Activated CD4-positive, alpha-beta T cell treated with anti-CD3 and anti-CD28 coated beads for 36 hours (primary cell): ENCODE measurements at regions of chr18 and their contacts with region 1.

Region 1: DNA sequence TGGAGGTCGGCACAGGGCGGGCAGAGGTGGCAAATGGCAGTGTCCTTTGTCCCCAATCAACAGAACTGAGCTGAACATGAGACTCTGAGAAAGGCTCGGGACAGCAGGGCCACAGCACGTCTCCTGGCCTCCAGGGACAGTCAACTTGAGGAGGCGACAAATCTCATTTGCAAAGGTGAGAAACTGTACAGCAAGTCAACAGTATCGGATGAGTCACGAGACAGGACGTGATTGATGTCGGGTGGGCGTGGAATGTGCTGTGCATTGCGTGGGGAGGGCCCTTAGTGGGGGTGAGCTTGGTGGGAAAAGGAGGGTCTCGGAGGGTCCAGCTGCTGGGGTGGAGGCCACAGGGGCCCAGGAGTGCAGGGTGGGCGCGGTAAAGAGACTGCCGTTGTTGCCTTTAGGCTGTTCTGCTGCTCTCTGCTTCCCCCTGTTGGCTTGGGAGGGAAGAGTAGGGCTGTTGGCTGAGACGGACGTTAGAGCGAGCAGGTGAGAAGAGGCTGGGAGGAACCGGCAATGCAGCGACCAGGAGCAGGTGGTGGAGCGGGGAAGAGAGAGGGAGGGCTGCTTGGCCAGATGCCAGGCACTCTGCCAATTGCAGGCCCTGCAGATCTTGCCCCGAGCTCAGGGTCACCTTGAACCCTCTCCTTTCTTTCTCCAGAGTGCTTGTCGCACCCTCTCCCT is 164.3 kb downstream of the BCL2 start:
- DNase-seq: peak; percentile 89
- ATAC-seq: peak; percentile 66
- H3K4me3 Mint-ChIP-seq: peak overlapping the region; percentile 73
- H3K27ac Mint-ChIP-seq: peak overlapping the region; percentile 95
- H3K4me1 Mint-ChIP-seq: peaks cover 99% of the 10 kb centered on the region
- H3K27me3 Mint-ChIP-seq: no peaks in the 10 kb centered on the region

Region 2: DNA sequence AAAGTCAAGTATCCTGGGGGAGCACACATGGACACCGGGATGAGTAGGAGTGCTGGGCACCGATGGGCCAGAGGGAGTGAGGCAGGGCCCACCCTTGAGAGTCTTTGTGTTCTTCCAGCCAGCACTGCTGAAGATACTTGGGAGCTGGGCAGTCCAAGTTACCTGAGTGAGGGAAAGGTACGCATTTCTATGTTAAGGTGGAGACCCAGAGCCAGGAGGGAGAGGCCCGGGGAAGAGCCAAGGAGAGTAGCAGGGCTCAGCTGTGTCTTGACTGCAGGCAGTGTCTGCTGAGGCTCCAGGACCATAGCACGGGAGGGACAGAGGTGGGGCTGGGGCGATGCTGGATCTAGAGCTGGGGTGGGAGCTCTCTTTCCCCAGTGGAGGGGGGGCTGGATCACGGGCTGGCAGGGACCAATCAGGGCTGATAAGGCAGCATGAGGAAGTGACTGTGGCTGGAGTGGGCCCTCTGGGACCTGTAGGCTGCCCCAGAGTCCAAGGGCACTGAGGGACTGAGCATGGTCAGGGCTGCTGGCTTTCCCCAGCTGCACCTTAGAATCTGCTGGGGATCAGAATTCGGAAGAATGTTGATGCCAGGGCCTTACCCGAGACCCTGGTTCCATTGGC is 150.7 kb before region 1 on chr18:
- CTCF ChIA-PET with region 1: no interaction called
- POLR2A ChIA-PET with region 1: no interaction called
- intact Hi-C with region 1: no loop called
- DNase-seq: no peak
- ATAC-seq: no peak
- H3K4me3 Mint-ChIP-seq: no peak overlapping the region
- H3K27ac Mint-ChIP-seq: no peak overlapping the region
- H3K4me1 Mint-ChIP-seq: no peaks in the 10 kb centered on the region
- H3K27me3 Mint-ChIP-seq: no peaks in the 10 kb centered on the region

Region 3: GRCh38 chr18:63074981-63075404 is 80.3 kb before region 1 on chr18:
- CTCF ChIA-PET with region 1: no interaction called
- POLR2A ChIA-PET with region 1: no interaction called
- intact Hi-C with region 1: no loop called
- DNase-seq: peak; percentile 84
- ATAC-seq: peak; percentile 90
- H3K4me3 Mint-ChIP-seq: peak overlapping the region; percentile 66
- H3K27ac Mint-ChIP-seq: no peak overlapping the region
- H3K4me1 Mint-ChIP-seq: peaks cover 7% of the 10 kb centered on the region
- H3K27me3 Mint-ChIP-seq: peaks cover 6% of the 10 kb centered on the region

Region 4: GRCh38 chr18:63131106-63131958 is 24.0 kb before region 1 on chr18:
- CTCF ChIA-PET with region 1: interaction called, 11 read pairs
- POLR2A ChIA-PET with region 1: no interaction called
- intact Hi-C with region 1: loop called in 1 of 2 experiments (anchors 1 kb)
- DNase-seq: peak; percentile 69
- ATAC-seq: peak; percentile 60
- H3K4me3 Mint-ChIP-seq: no peak overlapping the region
- H3K27ac Mint-ChIP-seq: peak overlapping the region; percentile 74
- H3K4me1 Mint-ChIP-seq: peaks cover 29% of the 10 kb centered on the region
- H3K27me3 Mint-ChIP-seq: no peaks in the 10 kb centered on the region

Region 5: DNA sequence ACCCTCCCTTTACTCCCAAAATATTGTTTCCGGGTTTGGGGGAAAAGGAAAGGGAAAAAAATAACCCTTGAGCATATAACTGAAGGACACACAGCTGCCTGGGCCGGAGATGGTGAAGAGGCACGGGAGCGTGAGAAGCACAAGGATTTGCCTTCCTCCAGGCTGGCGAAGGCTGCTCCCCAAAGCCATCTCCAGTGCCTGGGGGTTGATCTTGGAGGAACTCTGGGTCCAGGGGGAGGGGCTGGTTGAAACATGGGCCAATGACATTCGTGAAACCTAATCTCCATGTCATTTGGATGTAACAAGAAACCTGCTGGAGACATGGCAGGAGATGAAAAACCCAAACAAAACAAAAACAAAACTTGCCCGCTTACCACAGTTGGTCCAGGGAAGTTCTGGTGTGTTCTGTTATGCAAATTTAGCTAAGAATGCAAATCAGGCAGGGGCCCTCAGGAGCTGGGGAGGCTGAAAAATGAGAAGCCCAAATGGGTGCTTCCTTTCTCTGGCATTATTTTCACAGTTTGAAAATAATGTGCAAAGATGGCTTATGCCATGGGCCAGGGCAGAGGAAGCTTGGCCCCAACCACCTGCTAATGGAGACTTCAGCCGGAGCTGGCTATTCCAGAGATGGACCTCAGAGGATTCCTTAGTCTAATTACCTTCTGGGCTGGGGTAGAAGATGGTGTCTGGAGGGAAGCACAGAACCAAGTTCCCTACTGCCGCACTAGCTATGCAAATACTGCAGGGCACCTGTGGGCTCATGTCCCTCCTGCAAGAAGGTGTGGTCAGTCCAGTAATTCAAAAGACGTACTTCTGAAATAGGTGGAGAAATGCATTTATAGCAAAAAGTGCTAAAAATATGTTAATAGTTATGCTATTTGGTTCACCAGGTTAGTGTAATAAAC is 16.6 kb before region 1 on chr18:
- CTCF ChIA-PET with region 1: interaction called, 11 read pairs
- POLR2A ChIA-PET with region 1: interaction called, 4 read pairs
- intact Hi-C with region 1: loop called (anchors 1 to 2 kb)
- DNase-seq: peak; percentile 55
- ATAC-seq: peak; percentile 63
- H3K4me3 Mint-ChIP-seq: peak overlapping the region; percentile 72
- H3K27ac Mint-ChIP-seq: peak overlapping the region; percentile 70
- H3K4me1 Mint-ChIP-seq: peaks cover 54% of the 10 kb centered on the region
- H3K27me3 Mint-ChIP-seq: no peaks in the 10 kb centered on the region

Region 6: DNA sequence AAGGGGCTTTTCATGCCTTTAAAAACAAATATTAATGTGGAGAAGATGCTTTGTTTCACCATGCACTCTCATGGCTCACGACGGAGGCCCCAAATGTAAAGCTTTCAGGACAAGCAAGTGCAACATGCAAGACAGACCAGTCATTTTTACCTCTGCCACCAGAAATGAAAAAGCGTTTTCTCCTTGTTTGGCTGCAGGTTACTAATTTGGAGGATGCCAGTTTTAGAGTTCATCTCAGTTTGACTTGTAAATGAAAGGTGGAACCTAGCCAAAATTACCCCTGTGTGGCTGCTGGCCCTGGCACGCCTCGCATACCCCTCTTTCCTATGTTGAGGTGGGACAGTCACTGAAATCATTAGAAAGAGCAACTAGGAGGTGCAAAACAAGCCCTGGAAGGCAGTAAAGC is 25.7 kb after region 1 on chr18:
- CTCF ChIA-PET with region 1: interaction called, 4 read pairs
- POLR2A ChIA-PET with region 1: no interaction called
- intact Hi-C with region 1: loop called in 1 of 2 experiments (anchors 1 kb)
- DNase-seq: peak; percentile 56
- ATAC-seq: peak; percentile 83
- H3K4me3 Mint-ChIP-seq: no peak overlapping the region
- H3K27ac Mint-ChIP-seq: peak overlapping the region; percentile 53
- H3K4me1 Mint-ChIP-seq: peaks cover 59% of the 10 kb centered on the region
- H3K27me3 Mint-ChIP-seq: no peaks in the 10 kb centered on the region